ENCODE measurements at regions of chr1 and their contacts with region 1.

Region 1: GRCh38 chr1:150072959-150073358 is 5.4 kb downstream of the VPS45 start:
- DNase-seq: peak; percentile 16 to 19
- ATAC-seq: peak; percentile 70 to 73; a peak in 5 of 6 replicates
- H3K4me3 ChIP-seq: no peak overlapping the region
- H3K27ac ChIP-seq: no peak overlapping the region
- H3K4me1 ChIP-seq: peaks cover 6% of the 10 kb centered on the region; the same call in 2 of the 3 replicates
- CTCF ChIP-seq: peak; percentile 58
- EP300 ChIP-seq: no peak
- POLR2A ChIP-seq: no peak
- RAD21 ChIP-seq: peak; percentile 53 to 68

Region 2: DNA sequence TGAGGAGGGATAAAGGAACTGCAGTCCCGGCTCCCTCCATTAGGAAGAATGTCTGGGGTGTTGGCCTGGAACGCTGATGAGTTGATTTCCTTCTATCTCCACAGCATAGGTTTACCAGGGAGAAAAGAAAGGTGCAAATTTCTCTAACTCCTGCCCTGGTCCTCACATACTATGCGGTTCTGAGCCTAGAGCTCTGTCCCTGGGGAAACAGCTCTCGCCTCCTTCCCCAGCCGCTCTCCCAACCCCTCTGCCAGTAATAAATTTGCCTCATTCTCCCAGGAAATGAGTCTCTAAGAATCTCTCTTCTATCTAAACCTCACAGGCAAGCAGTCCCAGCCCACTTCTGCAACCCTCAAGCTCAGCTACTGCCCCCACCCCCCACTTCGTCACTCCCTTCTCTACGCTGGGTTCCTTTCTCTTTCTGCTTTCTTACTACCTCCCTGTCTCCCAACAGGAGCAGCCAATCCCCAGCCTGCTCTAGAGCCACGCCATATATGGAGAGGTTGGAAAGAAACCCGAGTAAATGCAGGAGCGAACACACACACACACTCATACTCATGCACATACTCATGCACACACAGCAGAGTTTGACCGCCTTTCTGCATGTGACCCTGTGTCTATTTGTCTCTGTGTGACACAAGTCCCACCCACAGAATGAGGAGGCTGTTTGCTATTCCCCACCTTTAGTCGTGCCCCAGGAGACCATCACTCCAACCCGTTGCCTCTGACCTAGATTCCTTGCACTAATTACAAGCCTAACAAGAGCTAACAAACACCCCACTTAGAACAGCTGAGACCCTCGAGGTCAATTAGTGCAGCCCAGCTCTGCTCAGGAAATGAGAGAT is 90.1 kb after region 1 on chr1:
- CTCF ChIA-PET with region 1: interaction called, 244 read pairs
- POLR2A ChIA-PET with region 1: no interaction called
- DNase-seq: peak in 1 of 2 experiments; percentile 49
- ATAC-seq: peak; percentile 18 to 58; a peak in 3 of 6 replicates
- H3K4me3 ChIP-seq: no peak overlapping the region
- H3K27ac ChIP-seq: no peak overlapping the region
- H3K4me1 ChIP-seq: no peaks in the 10 kb centered on the region
- CTCF ChIP-seq: no peak
- EP300 ChIP-seq: no peak
- POLR2A ChIP-seq: no peak
- RAD21 ChIP-seq: no peak

Measured in A549 (cell line).